Heart right ventricle (tissue), 16 donors: ENCODE measurements at regions of chr3 and their contacts with region 1.

Region 1: GRCh38 chr3:114803042-114803695 is 343.9 kb downstream of the ZBTB20 start:
- DNase-seq: no peak
- ATAC-seq: peak in 5 of 8 donors; percentile 35 to 66 (median 56)
- H3K4me3 ChIP-seq: peak overlapping the region in 4 of 10 donors; percentile 13 to 24 (median 18)
- H3K27ac ChIP-seq: peak overlapping the region in 6 of 10 donors; percentile 2 to 56 (median 40)
- H3K4me1 ChIP-seq: peaks cover 0 to 15% (median 5%) of the 10 kb centered on the region in 9 donors
- H3K27me3 ChIP-seq: no peaks in the 10 kb centered on the region
- CTCF ChIP-seq: no peak

Region 2: DNA sequence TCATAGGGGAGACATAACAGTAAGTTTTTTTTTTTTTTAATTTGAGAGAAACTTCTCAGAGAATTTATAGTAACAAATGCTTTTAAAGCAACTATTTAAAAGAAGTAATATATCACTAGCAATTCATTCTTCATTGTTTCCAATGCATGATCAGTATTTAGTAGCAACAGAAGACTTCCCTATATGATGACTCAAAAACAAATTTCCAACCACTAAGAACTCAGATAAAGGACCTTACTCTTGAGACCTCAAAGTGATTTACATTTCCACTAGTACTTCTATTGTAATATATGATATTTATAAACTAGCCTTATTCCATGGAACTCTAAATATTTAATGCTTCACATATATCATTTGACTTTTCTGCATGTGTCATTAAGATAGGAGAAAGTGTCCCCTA is 12.4 kb before region 1 on chr3:
- intact Hi-C with region 1: loop called in 1 of 10 experiments (anchors 1 kb)
- DNase-seq: no peak
- ATAC-seq: no peak
- H3K4me3 ChIP-seq: no peak overlapping the region
- H3K27ac ChIP-seq: no peak overlapping the region
- H3K4me1 ChIP-seq: peaks cover 0 to 29% (median 10%) of the 10 kb centered on the region in 9 donors
- H3K27me3 ChIP-seq: no peaks in the 10 kb centered on the region
- CTCF ChIP-seq: no peak

Region 3: DNA sequence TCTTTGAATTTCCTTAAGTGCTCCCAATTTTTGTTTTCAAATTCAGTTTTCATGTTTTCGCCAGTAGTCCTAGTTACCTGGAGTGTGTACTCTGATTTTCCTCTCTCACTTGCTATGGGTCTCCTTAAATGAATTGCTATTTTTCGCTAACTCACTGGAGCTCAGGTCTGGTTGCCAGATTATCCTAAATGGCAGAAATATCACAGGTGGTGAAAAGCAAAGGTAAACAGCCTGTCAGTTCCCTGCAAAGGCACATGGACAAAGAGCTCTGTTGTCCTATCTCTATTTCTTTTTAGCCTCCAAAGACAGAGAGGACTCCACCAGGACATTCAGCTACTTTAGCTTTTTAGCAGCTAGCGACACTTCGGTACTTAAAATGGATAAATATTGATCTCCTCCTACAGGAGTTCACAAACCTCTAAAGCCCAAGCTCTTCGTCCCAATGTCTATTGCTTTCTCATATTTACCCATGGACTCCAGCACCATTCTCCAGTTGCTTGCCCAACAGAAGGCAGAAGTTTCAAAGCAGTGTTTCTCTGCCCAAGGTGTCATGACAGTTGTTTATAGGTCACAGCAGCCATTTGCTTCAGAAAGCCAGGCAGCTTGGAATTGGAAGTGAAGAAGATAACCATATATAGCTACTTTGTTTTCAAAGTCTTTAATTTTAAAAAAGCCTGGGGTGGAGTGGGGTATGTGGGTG is 331.6 kb after region 1 on chr3:
- intact Hi-C with region 1: no loop called
- DNase-seq: no peak
- ATAC-seq: no peak
- H3K4me3 ChIP-seq: no peak overlapping the region
- H3K27ac ChIP-seq: no peak overlapping the region
- H3K4me1 ChIP-seq: peaks cover 0 to 12% (median 0%) of the 10 kb centered on the region in 9 donors
- H3K27me3 ChIP-seq: no peaks in the 10 kb centered on the region
- CTCF ChIP-seq: no peak